ENCODE measurements at regions of chr20 and their contacts with region 1.

Region 1: GRCh38 chr20:19661717-19662636 is 96.1 kb upstream of the RIN2 start:
- DNase-seq: peak; percentile 5
- H3K4me3 ChIP-seq: no peak overlapping the region
- CTCF ChIP-seq: peak; percentile 90

Region 2: GRCh38 chr20:18632196-18633009 is 1029.6 kb before region 1 on chr20:
- CTCF ChIA-PET with region 1: interaction called, 11 read pairs
- POLR2A ChIA-PET with region 1: no interaction called
- DNase-seq: no peak
- H3K4me3 ChIP-seq: no peak overlapping the region
- CTCF ChIP-seq: peak; percentile 96

Region 3: GRCh38 chr20:19205977-19206396 is 456.0 kb before region 1 on chr20:
- CTCF ChIA-PET with region 1: interaction called, 134 read pairs
- POLR2A ChIA-PET with region 1: no interaction called
- DNase-seq: no peak
- H3K4me3 ChIP-seq: no peak overlapping the region
- CTCF ChIP-seq: peak; percentile 89

Region 4: DNA sequence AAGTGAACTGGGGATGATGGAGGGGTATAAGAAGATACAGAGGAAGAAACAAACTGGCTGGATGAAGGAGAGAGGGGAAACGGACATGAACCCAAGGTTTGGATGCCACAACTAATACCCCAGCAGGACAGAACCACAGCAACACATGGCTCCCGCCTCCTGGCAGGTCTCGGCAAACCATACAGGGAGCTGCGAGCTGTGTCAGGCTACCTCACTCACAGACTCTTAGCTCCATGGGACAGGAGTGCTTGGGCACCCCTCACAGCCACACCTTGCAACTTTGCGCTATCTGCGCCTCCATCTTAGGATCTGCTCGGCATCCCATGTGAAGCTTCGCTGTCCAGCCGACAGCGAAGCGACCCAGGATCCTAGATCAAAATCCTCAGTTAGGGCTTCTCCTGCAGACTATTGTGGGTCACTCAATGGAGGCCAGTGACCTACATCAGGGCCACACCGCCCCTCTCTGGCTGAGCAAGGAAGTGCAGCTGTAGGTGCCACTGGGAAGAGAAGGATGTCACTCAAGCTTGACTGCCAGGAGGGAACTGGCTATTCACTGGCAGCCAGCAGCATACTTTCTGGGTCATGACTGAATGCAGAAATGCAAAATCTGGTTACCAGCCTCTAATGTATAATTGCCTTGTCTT is 78.3 kb before region 1 on chr20:
- CTCF ChIA-PET with region 1: interaction called, 40 read pairs
- POLR2A ChIA-PET with region 1: no interaction called
- DNase-seq: no peak
- H3K4me3 ChIP-seq: no peak overlapping the region
- CTCF ChIP-seq: peak; percentile 81

Region 5: GRCh38 chr20:19588732-19589131 is 73.2 kb before region 1 on chr20:
- CTCF ChIA-PET with region 1: interaction called, 40 read pairs
- POLR2A ChIA-PET with region 1: no interaction called
- DNase-seq: no peak
- H3K4me3 ChIP-seq: no peak overlapping the region
- CTCF ChIP-seq: no peak

Region 6: DNA sequence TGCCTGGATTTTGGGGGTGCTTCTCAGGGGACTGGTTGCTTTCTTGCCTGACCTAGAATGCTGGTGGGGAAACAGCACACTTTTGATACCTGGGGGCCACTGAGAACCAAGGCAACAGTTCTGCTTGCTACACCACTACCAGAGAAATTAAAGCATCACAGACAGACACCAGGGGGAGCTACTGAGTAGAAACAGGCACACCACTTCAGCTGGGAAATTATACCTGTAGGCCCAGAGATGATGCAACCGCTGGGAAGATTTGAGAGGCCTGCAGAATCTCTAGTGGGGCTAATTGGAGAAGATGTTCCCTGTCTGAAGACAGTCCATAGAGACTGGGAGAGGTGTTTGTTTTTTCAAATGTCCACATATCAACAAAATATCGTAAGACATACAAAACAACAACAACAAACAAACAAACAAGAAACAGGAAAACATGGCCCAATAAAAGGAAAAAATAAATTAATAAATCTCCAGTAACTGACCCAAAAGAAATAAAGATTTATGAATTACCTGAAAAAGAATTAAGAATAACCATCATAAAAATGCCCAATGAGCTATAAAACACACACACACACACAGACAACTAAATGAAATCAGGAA is 33.3 kb before region 1 on chr20:
- CTCF ChIA-PET with region 1: interaction called, 48 read pairs
- POLR2A ChIA-PET with region 1: no interaction called
- DNase-seq: no peak
- H3K4me3 ChIP-seq: no peak overlapping the region
- CTCF ChIP-seq: peak; percentile 67

Region 7: DNA sequence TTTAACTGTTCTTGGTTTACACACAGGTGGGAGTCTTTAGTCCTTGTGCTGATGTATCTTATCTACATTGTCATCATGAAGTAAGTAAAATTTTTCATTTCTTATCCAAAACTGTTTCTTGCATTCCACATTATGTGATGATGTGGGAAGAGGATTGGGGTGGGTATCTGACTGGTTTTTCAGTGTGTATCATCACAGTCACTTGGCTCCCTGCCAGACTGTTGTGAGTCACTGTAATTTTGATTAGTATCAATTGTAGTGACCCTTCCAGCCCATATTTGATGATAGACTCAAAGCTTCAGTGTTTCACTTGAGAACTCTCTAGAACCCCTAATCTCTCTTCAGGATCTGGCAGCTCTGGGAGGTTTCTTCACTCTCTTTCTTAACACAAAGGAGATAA is 11.6 kb after region 1 on chr20:
- CTCF ChIA-PET with region 1: interaction called, 20 read pairs
- POLR2A ChIA-PET with region 1: no interaction called
- DNase-seq: no peak
- H3K4me3 ChIP-seq: no peak overlapping the region
- CTCF ChIP-seq: no peak

Measured in AG04449 (cell line).